Left lung (tissue), 14 donors: ENCODE measurements at regions of chr12 and their contacts with region 1.

Region 1: GRCh38 chr12:12376646-12377448 is 20.0 kb downstream of the BORCS5 start:
- DNase-seq: peak in 2 of 4 donors; percentile 42 to 76
- ATAC-seq: peak; percentile 92
- H3K4me3 ChIP-seq: no peak overlapping the region
- H3K27ac ChIP-seq: no peak overlapping the region
- H3K4me1 ChIP-seq: peaks cover 0 to 31% of the 10 kb centered on the region in 2 donors
- H3K27me3 ChIP-seq: no peaks in the 10 kb centered on the region
- CTCF ChIP-seq: peak; percentile 68 to 69

Region 2: DNA sequence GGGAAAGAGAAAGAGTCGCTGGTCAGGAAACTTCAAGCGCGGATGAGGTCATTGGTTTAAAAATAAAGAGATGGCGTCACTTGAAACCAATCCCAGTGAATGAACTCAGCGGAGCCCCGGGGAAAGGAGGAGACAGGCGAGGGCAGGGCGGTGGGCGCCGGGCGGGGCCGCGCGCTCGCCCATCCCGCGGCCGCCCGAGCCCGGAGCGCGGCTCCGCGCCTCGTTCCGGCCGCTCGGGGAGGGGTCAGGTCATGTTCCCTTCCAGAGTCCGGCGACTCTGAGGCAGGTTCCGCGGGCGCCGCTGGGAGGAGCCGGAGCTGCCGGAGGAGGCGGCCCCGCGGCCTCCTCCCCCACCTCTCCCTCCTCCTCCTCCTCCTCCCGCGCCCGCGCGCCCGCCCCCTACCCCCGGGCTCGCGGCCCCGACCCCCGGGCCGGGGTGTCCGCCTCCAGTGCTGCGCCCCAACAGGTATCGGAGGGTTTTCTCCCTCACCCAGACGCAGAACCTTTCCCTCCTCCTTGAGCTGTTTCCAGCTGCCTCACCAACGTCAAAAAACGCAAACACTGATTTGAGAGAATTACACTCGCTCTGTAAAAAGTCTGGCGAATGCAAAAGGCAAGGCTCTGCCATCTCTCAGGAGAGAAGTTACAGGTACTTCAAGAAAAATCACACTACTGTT is 185.9 kb after region 1 on chr12 and contains the start of gene DUSP16:
- intact Hi-C with region 1: loop called in 1 of 2 experiments (anchors 10 kb)
- DNase-seq: peak; percentile 94 to 99 (median 96)
- ATAC-seq: peak; percentile 89
- H3K4me3 ChIP-seq: peak within 1 kb of the TSS; percentile 61 to 62
- H3K27ac ChIP-seq: peak within 1 kb of the TSS; percentile 97 to 99
- H3K4me1 ChIP-seq: peaks cover 5 to 38% of the 10 kb centered on the region in 2 donors
- H3K27me3 ChIP-seq: no peaks in the 10 kb centered on the region
- CTCF ChIP-seq: no peak
- polyA plus RNA-seq, gene DUSP16: 32.2 to 38.8 (median 35.5) TPM

Region 3: DNA sequence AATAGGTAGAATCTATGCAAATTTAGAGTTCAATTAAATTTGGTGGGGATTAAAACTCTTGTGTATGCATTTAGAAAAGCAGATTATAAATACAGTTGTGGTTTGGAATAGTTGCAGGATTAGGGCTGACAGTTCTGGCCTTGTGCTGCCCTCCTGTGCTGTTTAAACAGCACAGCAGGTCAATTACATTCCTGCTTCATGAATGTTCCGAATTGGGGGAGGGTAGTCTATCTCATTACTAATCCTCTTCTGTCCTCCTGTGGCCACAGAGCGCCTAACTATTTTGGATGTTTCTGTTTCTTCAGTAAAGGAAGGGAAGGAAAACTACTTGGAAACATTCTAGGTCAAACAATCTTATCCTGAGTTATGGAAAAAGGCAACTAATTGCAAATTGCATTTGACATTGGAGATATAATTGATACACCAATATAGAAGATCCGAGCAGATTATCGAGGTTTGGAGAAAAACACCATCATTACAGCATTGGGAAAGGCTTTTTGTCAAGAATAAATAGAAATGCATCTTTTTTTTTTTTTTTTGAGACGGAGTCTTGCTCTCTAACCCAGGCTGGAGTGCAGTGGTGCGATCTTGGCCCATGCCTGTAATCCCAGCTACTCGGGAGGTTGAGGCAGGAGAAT is 327.9 kb after region 1 on chr12:
- intact Hi-C with region 1: loop called in 1 of 2 experiments (anchors 10 kb)
- DNase-seq: peak in 3 of 4 donors; percentile 57 to 92 (median 77)
- ATAC-seq: peak; percentile 100
- H3K4me3 ChIP-seq: no peak overlapping the region
- H3K27ac ChIP-seq: no peak overlapping the region
- H3K4me1 ChIP-seq: peaks cover 0 to 6% of the 10 kb centered on the region in 2 donors
- H3K27me3 ChIP-seq: no peaks in the 10 kb centered on the region
- CTCF ChIP-seq: peak; percentile 57 to 79

Region 4: DNA sequence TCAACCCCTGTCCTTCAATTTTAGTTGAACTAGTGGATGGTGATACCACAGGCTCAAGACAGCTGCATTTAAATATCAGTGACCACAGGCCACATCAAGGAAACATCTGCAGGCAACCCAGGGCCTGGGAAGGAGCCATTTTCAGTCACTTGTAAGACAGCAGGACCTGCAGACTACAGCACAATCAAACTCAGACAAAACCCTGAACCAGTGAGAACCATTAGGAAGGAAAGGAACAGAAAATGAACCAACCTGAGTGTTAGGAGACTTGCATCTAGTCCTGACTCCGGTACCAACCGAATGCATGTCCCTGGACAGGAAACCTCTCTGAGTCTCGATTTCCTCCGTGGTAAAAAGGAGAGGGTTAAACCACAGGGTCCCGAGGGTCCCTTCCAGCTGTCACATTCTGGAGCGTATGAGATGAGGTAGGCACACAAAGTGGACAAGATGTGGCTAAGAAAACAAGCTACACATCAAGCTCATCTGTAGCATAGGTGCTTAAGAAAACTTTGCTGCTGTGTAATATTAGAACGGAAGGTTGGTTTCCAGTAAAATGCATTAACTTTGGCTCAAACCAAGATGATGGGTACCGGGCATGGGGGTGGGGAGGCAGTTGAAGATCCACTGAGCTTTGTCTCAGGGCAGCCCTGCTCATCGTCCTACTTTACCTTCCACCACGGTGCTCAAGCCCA is 338.8 kb after region 1 on chr12:
- intact Hi-C with region 1: no loop called
- DNase-seq: no peak
- ATAC-seq: no peak
- H3K4me3 ChIP-seq: peak overlapping the region in 1 of 2 donors; percentile 90
- H3K27ac ChIP-seq: peak overlapping the region; percentile 99 to 100
- H3K4me1 ChIP-seq: peaks cover 14 to 49% of the 10 kb centered on the region in 2 donors
- H3K27me3 ChIP-seq: no peaks in the 10 kb centered on the region
- CTCF ChIP-seq: no peak